CD14-positive monocyte (primary cell): ENCODE measurements at regions of chr18 and their contacts with region 1.

Region 1: GRCh38 chr18:10723496-10723895 is 197.7 kb downstream of the NAPG start:
- DNase-seq: no peak
- H3K4me3 ChIP-seq: no peak overlapping the region
- H3K4me3 Mint-ChIP-seq: no peak overlapping the region
- H3K27ac ChIP-seq: no peak overlapping the region
- H3K27ac Mint-ChIP-seq: no peak overlapping the region
- H3K4me1 ChIP-seq: peaks cover 0 to 9% of the 10 kb centered on the region in 2 donors
- H3K4me1 Mint-ChIP-seq: peaks cover 4% of the 10 kb centered on the region
- H3K27me3 ChIP-seq: peaks cover 0 to 5% of the 10 kb centered on the region in 2 donors
- H3K27me3 Mint-ChIP-seq: peaks cover 12 to 23% (median 22%) of the 10 kb centered on the region in 3 donors
- CTCF ChIP-seq: no peak

Region 2: GRCh38 chr18:10546557-10547300 is 176.8 kb before region 1 on chr18:
- intact Hi-C with region 1: loop called in 1 of 2 experiments (anchors 5 kb)
- DNase-seq: no peak
- H3K4me3 ChIP-seq: no peak overlapping the region
- H3K4me3 Mint-ChIP-seq: no peak overlapping the region
- H3K27ac ChIP-seq: no peak overlapping the region
- H3K27ac Mint-ChIP-seq: no peak overlapping the region
- H3K4me1 ChIP-seq: no peaks in the 10 kb centered on the region
- H3K4me1 Mint-ChIP-seq: no peaks in the 10 kb centered on the region
- H3K27me3 ChIP-seq: no peaks in the 10 kb centered on the region
- H3K27me3 Mint-ChIP-seq: peaks cover 0 to 2% (median 0%) of the 10 kb centered on the region in 3 donors
- CTCF ChIP-seq: no peak

Region 3: GRCh38 chr18:10579079-10579867 is 144.2 kb before region 1 on chr18:
- intact Hi-C with region 1: no loop called
- DNase-seq: no peak
- H3K4me3 ChIP-seq: no peak overlapping the region
- H3K4me3 Mint-ChIP-seq: no peak overlapping the region
- H3K27ac ChIP-seq: no peak overlapping the region
- H3K27ac Mint-ChIP-seq: peak overlapping the region in 1 of 7 donors; percentile 8
- H3K4me1 ChIP-seq: peaks cover 0 to 9% of the 10 kb centered on the region in 2 donors
- H3K4me1 Mint-ChIP-seq: peaks cover 8% of the 10 kb centered on the region
- H3K27me3 ChIP-seq: no peaks in the 10 kb centered on the region
- H3K27me3 Mint-ChIP-seq: peaks cover 0 to 4% (median 0%) of the 10 kb centered on the region in 3 donors
- CTCF ChIP-seq: no peak

Region 4: DNA sequence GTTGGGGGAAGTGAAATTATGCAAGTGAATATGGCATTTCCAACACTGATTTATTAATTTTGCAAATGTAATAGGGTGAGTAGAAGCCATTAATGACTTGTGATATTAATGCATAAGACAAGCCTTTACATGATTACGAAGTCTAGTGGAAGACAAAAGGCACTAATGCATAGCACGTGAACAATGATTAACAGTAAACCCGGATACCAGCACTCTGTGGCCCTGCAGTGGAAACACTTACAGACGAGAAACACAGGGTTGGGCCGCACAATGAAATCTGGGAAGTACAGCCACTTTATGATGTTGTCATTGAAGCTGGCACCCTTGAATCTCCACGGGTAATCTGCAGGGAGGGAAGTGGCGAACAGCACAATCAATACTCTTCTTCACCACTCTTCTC is 35.7 kb after region 1 on chr18:
- intact Hi-C with region 1: no loop called
- DNase-seq: no peak
- H3K4me3 ChIP-seq: no peak overlapping the region
- H3K4me3 Mint-ChIP-seq: no peak overlapping the region
- H3K27ac ChIP-seq: no peak overlapping the region
- H3K27ac Mint-ChIP-seq: no peak overlapping the region
- H3K4me1 ChIP-seq: no peaks in the 10 kb centered on the region
- H3K4me1 Mint-ChIP-seq: no peaks in the 10 kb centered on the region
- H3K27me3 ChIP-seq: no peaks in the 10 kb centered on the region
- H3K27me3 Mint-ChIP-seq: peaks cover 0 to 4% (median under 1%) of the 10 kb centered on the region in 3 donors
- CTCF ChIP-seq: no peak